ENCODE measurements at regions of chr9 and their contacts with region 1.

Region 1: DNA sequence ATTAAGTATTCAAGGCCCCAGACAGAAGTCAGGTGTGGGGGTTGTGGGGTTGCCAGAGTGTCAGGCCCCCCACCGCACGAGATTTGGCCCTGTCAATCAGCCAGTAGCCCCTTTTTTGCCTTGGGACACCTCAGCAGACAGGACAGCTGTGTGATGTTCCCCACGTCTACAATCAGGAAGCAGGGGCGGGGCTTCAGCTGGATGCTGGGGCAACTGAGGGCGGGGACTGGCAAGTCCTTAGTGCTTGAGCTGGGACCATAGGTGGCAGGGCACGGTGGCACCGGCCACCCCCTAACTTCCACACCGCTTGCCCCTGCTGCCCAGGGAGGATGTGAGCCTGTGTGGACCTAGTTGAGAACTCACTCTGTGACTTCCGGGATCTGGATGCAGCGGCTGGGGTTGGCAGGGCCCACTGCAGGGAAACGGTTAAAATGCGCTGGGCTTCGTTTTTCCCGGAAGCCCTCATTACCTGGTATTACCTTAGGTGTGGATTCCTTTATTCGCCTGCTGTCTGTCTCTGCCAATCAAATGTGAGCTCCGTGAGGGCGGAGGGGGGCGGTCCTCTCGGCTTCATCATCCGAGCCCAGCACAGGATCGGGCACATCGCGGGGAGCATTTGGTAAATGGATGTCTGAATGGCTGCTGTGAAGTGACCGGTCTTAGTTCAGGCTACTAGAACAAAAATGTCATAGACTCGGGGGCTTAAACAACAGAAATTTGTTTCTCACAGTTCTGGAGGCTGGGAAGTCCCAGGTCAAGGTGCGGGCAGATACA is 7.5 kb upstream of the GTF3C5 start:
- DNase-seq: no peak
- ATAC-seq: no peak
- H3K4me3 ChIP-seq: no peak overlapping the region
- H3K27ac ChIP-seq: no peak overlapping the region
- H3K4me1 ChIP-seq: no peaks in the 10 kb centered on the region
- H3K27me3 ChIP-seq: no peaks in the 10 kb centered on the region; the same call in 1 of the 2 replicates
- CTCF ChIP-seq: no peak
- POLR2A ChIP-seq: no peak
- RAD21 ChIP-seq: no peak

Region 2: DNA sequence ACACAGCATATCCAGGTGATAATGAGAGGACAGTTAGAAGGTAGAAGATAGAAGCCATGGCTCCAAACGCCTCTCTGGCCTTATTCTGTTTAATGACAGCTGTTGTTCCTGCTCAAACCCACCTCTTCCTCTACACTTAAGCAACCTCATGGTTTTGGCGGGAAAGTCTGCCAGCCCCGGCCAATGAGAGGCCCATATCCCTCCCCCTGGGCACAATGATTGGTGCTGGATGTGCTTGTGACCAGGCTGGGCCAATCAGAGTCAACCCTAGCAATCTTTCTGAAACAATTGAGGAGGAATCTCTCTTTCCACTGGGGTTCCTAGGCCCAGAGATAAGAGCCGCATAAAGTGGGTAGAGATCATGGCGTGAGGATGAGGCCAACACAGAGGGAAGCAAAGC is 49.6 kb before region 1 on chr9:
- CTCF ChIA-PET with region 1: interaction called, 3 read pairs
- POLR2A ChIA-PET with region 1: no interaction called
- dilution Hi-C with region 1: no loop called
- in situ Hi-C with region 1: no loop called
- intact Hi-C with region 1: loop called (anchors 1 kb)
- DNase-seq: peak; percentile 18
- ATAC-seq: no peak; the same call in 1 of the 2 replicates
- H3K4me3 ChIP-seq: no peak overlapping the region
- H3K27ac ChIP-seq: no peak overlapping the region
- H3K4me1 ChIP-seq: no peaks in the 10 kb centered on the region
- H3K27me3 ChIP-seq: peaks cover 51% of the 10 kb centered on the region
- CTCF ChIP-seq: no peak
- POLR2A ChIP-seq: no peak
- RAD21 ChIP-seq: no peak

Region 3: DNA sequence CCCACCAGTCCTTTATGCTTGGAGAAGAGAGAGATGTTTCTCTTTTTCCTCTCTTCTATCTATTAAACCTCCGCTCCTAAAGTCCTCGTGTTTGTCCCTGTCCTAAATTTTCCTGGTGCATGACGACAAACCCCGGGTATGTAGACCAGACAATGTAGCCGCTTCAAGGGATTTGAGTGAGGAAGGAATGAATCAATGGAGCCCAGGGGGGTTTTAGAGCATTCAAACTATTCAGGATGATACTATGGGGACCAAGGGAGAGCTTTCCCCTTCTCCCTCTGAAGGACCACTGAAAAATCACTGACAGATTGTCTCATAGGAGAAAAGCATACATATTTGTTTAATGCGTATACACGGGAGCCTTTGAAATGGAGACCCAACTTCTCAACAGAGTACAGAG is 56.9 kb after region 1 on chr9:
- CTCF ChIA-PET with region 1: no interaction called
- POLR2A ChIA-PET with region 1: no interaction called
- dilution Hi-C with region 1: no loop called
- in situ Hi-C with region 1: no loop called
- intact Hi-C with region 1: no loop called
- DNase-seq: no peak
- ATAC-seq: no peak
- H3K4me3 ChIP-seq: no peak overlapping the region
- H3K27ac ChIP-seq: no peak overlapping the region
- H3K4me1 ChIP-seq: peaks cover 7% of the 10 kb centered on the region
- H3K27me3 ChIP-seq: peaks cover 28% of the 10 kb centered on the region
- CTCF ChIP-seq: no peak
- POLR2A ChIP-seq: no peak
- RAD21 ChIP-seq: no peak

Region 4: GRCh38 chr9:133103183-133103986 is 80.1 kb after region 1 on chr9:
- CTCF ChIA-PET with region 1: no interaction called
- POLR2A ChIA-PET with region 1: interaction called, 12 read pairs
- dilution Hi-C with region 1: no loop called
- in situ Hi-C with region 1: no loop called
- intact Hi-C with region 1: no loop called
- DNase-seq: peak; percentile 19
- ATAC-seq: peak; percentile 95
- H3K4me3 ChIP-seq: no peak overlapping the region
- H3K27ac ChIP-seq: no peak overlapping the region
- H3K4me1 ChIP-seq: no peaks in the 10 kb centered on the region
- H3K27me3 ChIP-seq: no peaks in the 10 kb centered on the region
- CTCF ChIP-seq: peak; percentile 88
- POLR2A ChIP-seq: peak; percentile 36; the same call in 1 of the 2 replicates
- RAD21 ChIP-seq: peak; percentile 94

Region 5: GRCh38 chr9:133133681-133134418 is 110.5 kb after region 1 on chr9:
- CTCF ChIA-PET with region 1: no interaction called
- POLR2A ChIA-PET with region 1: no interaction called
- dilution Hi-C with region 1: no loop called
- in situ Hi-C with region 1: no loop called
- intact Hi-C with region 1: no loop called
- DNase-seq: peak; percentile 96
- ATAC-seq: peak; percentile 89
- H3K4me3 ChIP-seq: no peak overlapping the region
- H3K27ac ChIP-seq: peak overlapping the region; percentile 68
- H3K4me1 ChIP-seq: peaks cover 31% of the 10 kb centered on the region
- H3K27me3 ChIP-seq: no peaks in the 10 kb centered on the region
- CTCF ChIP-seq: no peak
- POLR2A ChIP-seq: peak; percentile 37; the same call in 1 of the 2 replicates
- RAD21 ChIP-seq: no peak

Region 6: DNA sequence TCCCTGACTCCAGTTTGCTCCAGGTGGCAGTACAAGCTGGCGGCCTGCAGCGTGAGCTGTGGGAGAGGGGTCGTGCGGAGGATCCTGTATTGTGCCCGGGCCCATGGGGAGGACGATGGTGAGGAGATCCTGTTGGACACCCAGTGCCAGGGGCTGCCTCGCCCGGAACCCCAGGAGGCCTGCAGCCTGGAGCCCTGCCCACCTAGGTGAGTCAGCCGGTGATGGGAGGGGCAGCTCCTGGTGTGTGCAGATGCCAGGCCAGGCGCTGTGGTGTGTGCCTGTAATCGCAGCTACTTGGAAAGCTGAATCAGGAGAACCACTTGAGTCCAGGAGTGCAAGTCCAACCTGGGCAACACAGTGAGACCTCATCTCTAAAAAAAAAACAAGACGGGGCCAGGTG is 426.5 kb after region 1 on chr9:
- CTCF ChIA-PET with region 1: no interaction called
- POLR2A ChIA-PET with region 1: no interaction called
- dilution Hi-C with region 1: no loop called
- in situ Hi-C with region 1: no loop called
- intact Hi-C with region 1: no loop called
- DNase-seq: no peak
- ATAC-seq: no peak
- H3K4me3 ChIP-seq: no peak overlapping the region
- H3K27ac ChIP-seq: no peak overlapping the region
- H3K4me1 ChIP-seq: no peaks in the 10 kb centered on the region
- H3K27me3 ChIP-seq: peaks cover 15% of the 10 kb centered on the region
- CTCF ChIP-seq: no peak
- POLR2A ChIP-seq: no peak
- RAD21 ChIP-seq: no peak